ENCODE measurements at regions of chr10 and their contacts with region 1.

Region 1: GRCh38 chr10:97792141-97792721 is 20.4 kb upstream of the SFRP5 start:
- DNase-seq: peak; percentile 79
- ATAC-seq: peak; percentile 69
- H3K4me3 Mint-ChIP-seq: no peak overlapping the region
- H3K27ac Mint-ChIP-seq: peak overlapping the region; percentile 43
- H3K4me1 Mint-ChIP-seq: peaks cover 26% of the 10 kb centered on the region
- H3K27me3 Mint-ChIP-seq: peaks cover 7% of the 10 kb centered on the region

Region 2: GRCh38 chr10:97701438-97702069 is 90.7 kb before region 1 on chr10:
- CTCF ChIA-PET with region 1: interaction called, 10 read pairs
- DNase-seq: peak; percentile 68
- ATAC-seq: peak; percentile 96
- H3K4me3 Mint-ChIP-seq: no peak overlapping the region
- H3K27ac Mint-ChIP-seq: no peak overlapping the region
- H3K4me1 Mint-ChIP-seq: peaks cover 8% of the 10 kb centered on the region
- H3K27me3 Mint-ChIP-seq: peaks cover 21% of the 10 kb centered on the region

Region 3: GRCh38 chr10:97780841-97781617 is 11.2 kb before region 1 on chr10:
- CTCF ChIA-PET with region 1: interaction called, 25 read pairs
- DNase-seq: no peak
- ATAC-seq: peak; percentile 8
- H3K4me3 Mint-ChIP-seq: no peak overlapping the region
- H3K27ac Mint-ChIP-seq: peak overlapping the region; percentile 69
- H3K4me1 Mint-ChIP-seq: peaks cover 21% of the 10 kb centered on the region
- H3K27me3 Mint-ChIP-seq: no peaks in the 10 kb centered on the region

Region 4: GRCh38 chr10:97849687-97850402 is 57.6 kb after region 1 on chr10 and contains the start of gene GOLGA7B:
- CTCF ChIA-PET with region 1: interaction called, 10 read pairs
- DNase-seq: peak; percentile 81
- ATAC-seq: peak; percentile 92
- H3K4me3 Mint-ChIP-seq: peak within 1 kb of the TSS; percentile 76
- H3K27ac Mint-ChIP-seq: peak within 1 kb of the TSS; percentile 64
- H3K4me1 Mint-ChIP-seq: peaks cover 36% of the 10 kb centered on the region
- H3K27me3 Mint-ChIP-seq: peaks cover 7% of the 10 kb centered on the region
- total RNA-seq, gene GOLGA7B: 1.5 to 4.3 TPM

Region 5: DNA sequence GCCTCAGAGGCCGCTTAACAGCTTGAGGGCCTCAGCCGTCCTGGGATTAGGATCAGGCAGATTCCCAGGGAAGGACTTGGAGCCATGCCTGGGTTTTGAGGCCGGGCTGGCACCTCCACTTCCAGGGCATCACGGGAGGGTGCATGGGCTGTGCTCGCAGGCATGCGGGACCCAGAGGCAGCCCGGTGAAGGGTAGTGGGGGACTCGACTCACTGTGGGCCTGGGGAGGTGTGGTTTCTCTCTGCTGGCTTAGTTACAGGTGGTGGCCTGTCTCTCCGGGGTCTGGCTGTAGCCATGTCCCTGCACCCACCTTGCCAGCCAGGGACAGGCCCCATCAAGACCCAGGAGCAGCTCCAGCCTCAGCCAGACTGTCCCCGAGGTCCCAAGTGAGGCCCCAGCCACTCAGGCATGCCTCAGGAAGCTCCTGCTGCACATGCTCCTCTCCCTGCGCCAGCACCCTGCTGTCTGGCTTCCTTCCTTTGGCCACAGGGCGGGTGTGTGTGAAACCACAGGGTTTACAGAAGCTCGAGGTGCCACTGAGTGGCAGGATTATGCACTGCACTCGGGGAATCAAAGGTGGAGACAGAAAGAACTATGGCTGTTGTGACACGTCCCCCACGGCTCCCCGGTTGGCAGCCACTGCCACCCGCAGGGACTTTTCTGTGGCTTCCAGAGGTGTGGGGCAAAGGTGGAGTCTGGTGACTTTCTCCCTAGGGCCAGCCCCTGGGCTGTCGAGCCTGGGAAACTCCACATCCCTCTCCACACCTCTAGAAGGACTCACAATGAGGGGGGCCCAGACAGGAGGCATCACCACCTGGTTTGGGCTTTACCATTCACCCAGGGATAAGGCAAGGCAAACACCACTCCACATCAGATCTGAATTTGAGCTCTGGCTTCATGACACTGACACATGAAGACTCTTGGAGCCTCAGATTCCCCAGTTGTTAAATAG is 77.1 kb after region 1 on chr10:
- CTCF ChIA-PET with region 1: interaction called, 288 read pairs
- DNase-seq: peak; percentile 96
- ATAC-seq: peak; percentile 99
- H3K4me3 Mint-ChIP-seq: no peak overlapping the region
- H3K27ac Mint-ChIP-seq: peak overlapping the region; percentile 73
- H3K4me1 Mint-ChIP-seq: peaks cover 15% of the 10 kb centered on the region
- H3K27me3 Mint-ChIP-seq: peaks cover 10% of the 10 kb centered on the region